ENCODE measurements at regions of chr4 and their contacts with region 1.

Region 1: GRCh38 chr4:152850377-152850776 is 70.6 kb downstream of the ARFIP1 start:
- DNase-seq: peak in 1 of 4 experiments; percentile 1
- ATAC-seq: no peak
- H3K4me3 ChIP-seq: no peak overlapping the region
- H3K27ac ChIP-seq: no peak overlapping the region
- H3K4me1 ChIP-seq: no peaks in the 10 kb centered on the region
- H3K27me3 ChIP-seq: no peaks in the 10 kb centered on the region
- CTCF ChIP-seq: no peak
- EP300 ChIP-seq: no peak
- POLR2A ChIP-seq: no peak
- RAD21 ChIP-seq: no peak

Region 2: DNA sequence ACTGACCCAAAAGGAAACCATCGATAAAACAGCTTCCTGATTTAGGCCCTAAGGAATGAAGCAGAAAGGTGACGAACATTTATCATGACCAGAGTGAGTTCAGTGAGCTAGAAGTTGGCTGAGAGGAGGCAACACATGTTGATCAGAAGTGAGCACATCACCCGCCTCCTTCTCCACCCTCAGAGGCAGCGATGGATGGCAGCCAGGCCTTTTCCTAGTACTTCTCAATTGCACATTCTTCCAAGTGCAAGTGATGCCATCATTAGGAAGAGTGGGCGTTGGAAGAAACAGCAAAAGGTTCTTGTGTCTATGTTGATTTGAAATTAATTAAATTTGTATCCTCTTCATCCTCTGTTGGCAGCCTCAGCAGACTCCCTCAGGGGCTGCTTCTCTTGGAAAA is 222.2 kb before region 1 on chr4:
- CTCF ChIA-PET with region 1: no interaction called
- POLR2A ChIA-PET with region 1: no interaction called
- in situ Hi-C with region 1: no loop called
- intact Hi-C with region 1: no loop called
- DNase-seq: no peak
- ATAC-seq: no peak
- H3K4me3 ChIP-seq: no peak overlapping the region
- H3K27ac ChIP-seq: no peak overlapping the region
- H3K4me1 ChIP-seq: no peaks in the 10 kb centered on the region
- H3K27me3 ChIP-seq: peaks cover 5 to 8% of the 10 kb centered on the region in 2 experiments; a peak in 4 of 5 replicates
- CTCF ChIP-seq: no peak
- EP300 ChIP-seq: no peak
- POLR2A ChIP-seq: no peak
- RAD21 ChIP-seq: no peak

Region 3: DNA sequence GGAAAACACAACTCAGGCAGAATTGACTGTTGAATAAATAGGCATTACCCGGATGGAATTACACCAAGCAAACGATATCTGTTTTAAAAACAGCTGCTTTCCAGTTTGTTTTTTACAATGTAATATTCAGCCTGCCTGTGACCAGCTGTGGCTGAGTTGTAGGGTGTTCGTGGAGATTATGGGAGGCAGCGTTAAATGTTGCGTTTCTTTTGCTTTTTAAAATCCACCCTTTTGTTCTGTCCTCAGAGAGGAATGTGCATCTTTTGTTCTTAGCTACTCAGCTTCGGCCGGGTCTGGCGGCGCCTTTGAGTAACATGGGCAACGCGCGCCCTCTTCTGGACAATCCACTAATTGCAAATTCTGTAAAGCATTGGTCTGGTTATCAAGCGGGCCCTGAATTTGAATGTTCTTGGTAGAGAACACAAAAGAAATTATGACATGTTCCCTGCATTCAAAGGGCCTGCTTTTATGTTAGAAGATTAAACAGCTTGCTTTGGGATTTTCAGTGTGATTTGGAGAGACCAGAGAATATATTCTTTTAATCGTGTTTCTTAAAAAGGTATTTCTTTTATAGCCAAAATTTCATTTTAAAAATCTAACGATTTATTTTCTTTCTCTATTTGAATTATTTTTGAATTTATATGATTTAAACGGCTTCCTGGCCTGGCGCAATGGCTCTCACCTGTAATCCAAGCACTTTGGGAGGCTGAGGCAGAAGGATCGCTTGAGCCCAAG is 277.6 kb after region 1 on chr4:
- CTCF ChIA-PET with region 1: interaction called, 14 read pairs
- POLR2A ChIA-PET with region 1: no interaction called
- in situ Hi-C with region 1: loop called (anchors 10 kb)
- intact Hi-C with region 1: loop called (anchors 1 kb)
- DNase-seq: peak; percentile 61 to 84 (median 76)
- ATAC-seq: peak; percentile 96
- H3K4me3 ChIP-seq: no peak overlapping the region
- H3K27ac ChIP-seq: no peak overlapping the region
- H3K4me1 ChIP-seq: no peaks in the 10 kb centered on the region
- H3K27me3 ChIP-seq: peaks cover 0 to 11% of the 10 kb centered on the region in 2 experiments; a peak in 3 of 5 replicates
- CTCF ChIP-seq: peak; percentile 86 to 88 (median 86)
- EP300 ChIP-seq: no peak
- POLR2A ChIP-seq: no peak
- RAD21 ChIP-seq: peak; percentile 79 to 90

Region 4: DNA sequence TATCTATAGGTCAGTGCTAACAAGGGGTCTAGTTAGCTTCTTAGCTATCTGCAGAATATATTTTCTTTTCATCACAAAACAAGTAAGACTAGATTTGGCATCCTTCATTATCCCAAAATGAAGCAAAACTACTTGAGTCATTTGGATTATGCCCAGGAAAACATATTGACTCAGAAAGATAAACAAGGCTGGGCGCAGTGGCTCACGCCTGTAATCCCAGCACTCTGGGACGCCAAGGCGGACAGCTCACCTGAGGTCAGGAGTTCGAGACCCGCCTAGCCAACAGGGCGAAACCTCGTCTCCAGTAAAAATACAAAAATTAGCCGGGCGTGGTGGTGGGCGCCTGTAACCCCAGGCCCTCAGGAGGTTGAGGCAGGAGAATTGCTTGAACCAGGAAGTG is 476.1 kb after region 1 on chr4:
- CTCF ChIA-PET with region 1: no interaction called
- POLR2A ChIA-PET with region 1: no interaction called
- in situ Hi-C with region 1: loop called (anchors 25 kb)
- intact Hi-C with region 1: loop called (anchors 10 kb)
- DNase-seq: no peak
- ATAC-seq: no peak
- H3K4me3 ChIP-seq: no peak overlapping the region
- H3K27ac ChIP-seq: no peak overlapping the region
- H3K4me1 ChIP-seq: no peaks in the 10 kb centered on the region
- H3K27me3 ChIP-seq: peaks cover 9 to 11% of the 10 kb centered on the region in 2 experiments; a peak in 4 of 5 replicates
- CTCF ChIP-seq: no peak
- EP300 ChIP-seq: no peak
- POLR2A ChIP-seq: no peak
- RAD21 ChIP-seq: no peak

Region 5: GRCh38 chr4:153634738-153635353 is 784.5 kb after region 1 on chr4:
- CTCF ChIA-PET with region 1: no interaction called
- POLR2A ChIA-PET with region 1: no interaction called
- in situ Hi-C with region 1: loop called (anchors 10 kb)
- intact Hi-C with region 1: no loop called
- DNase-seq: peak; percentile 23 to 55 (median 38)
- ATAC-seq: peak; percentile 75
- H3K4me3 ChIP-seq: no peak overlapping the region
- H3K27ac ChIP-seq: no peak overlapping the region
- H3K4me1 ChIP-seq: peaks cover 0 to 2% of the 10 kb centered on the region in 2 experiments; a peak in 1 of 5 replicates
- H3K27me3 ChIP-seq: no peaks in the 10 kb centered on the region
- CTCF ChIP-seq: peak; percentile 41 to 75 (median 66); a peak in 5 of 6 replicates
- EP300 ChIP-seq: no peak
- POLR2A ChIP-seq: no peak
- RAD21 ChIP-seq: peak in 1 of 2 experiments; percentile 43; a peak in 3 of 4 replicates

Measured in K562 (cell line).